ENCODE measurements at regions of chr16 and their contacts with region 1.

Region 1: GRCh38 chr16:66830422-66831404 is at the start of gene NAE1:
- DNase-seq: peak; percentile 89
- H3K4me3 Mint-ChIP-seq: peak within 1 kb of the TSS; percentile 71
- H3K27ac Mint-ChIP-seq: peak within 1 kb of the TSS; percentile 78
- H3K4me1 Mint-ChIP-seq: peaks cover 36% of the 10 kb centered on the region
- H3K27me3 Mint-ChIP-seq: peaks cover 4% of the 10 kb centered on the region

Region 2: GRCh38 chr16:66751303-66751991 is 79.3 kb before region 1 on chr16 and contains the start of gene DYNC1LI2:
- CTCF ChIA-PET with region 1: interaction called, 12 read pairs
- DNase-seq: peak; percentile 87
- H3K4me3 Mint-ChIP-seq: peak within 1 kb of the TSS; percentile 76
- H3K27ac Mint-ChIP-seq: peak within 1 kb of the TSS; percentile 84
- H3K4me1 Mint-ChIP-seq: peaks cover 45% of the 10 kb centered on the region
- H3K27me3 Mint-ChIP-seq: peaks cover 26% of the 10 kb centered on the region

Region 3: GRCh38 chr16:66810391-66810790 is 20.3 kb before region 1 on chr16:
- CTCF ChIA-PET with region 1: interaction called, 15 read pairs
- DNase-seq: no peak
- H3K4me3 Mint-ChIP-seq: no peak overlapping the region
- H3K27ac Mint-ChIP-seq: no peak overlapping the region
- H3K4me1 Mint-ChIP-seq: no peaks in the 10 kb centered on the region
- H3K27me3 Mint-ChIP-seq: no peaks in the 10 kb centered on the region

Region 4: DNA sequence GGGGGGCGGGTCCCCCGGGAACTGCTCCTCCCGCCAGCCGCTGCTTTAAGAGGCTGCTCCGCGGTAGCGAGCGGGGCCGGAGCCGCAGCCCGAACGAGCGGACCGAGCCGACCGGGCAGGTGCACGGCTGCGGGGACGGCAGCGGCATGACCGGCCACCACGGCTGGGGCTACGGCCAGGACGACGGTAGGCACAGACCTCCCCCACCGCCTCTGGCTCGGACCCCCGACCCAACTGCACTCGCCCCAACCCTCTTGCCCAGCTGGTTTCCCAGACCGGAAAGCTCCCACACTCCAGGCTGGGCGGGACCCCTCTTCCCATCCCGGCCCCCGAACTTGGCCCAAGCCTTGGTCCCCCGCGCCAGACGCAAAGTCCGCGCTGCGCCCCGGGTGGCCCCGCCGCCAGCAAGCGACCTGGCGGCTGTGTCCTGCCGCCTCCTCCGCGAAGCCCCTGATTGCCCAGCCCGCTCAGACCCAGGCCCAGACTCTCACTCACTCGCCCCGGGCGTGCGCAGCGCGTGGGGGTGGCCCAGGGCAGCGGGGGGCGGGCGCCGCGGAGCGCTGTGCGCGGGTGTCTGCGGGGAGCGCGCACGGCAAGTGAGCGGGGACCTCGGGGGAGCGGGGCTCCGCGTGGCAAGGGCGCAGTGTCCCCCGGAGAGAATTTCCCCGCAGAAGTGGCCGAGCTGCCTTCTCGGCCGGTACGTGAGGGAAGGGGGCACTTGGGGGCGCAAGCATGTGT is 13.8 kb after region 1 on chr16 and contains the start of gene CA7:
- CTCF ChIA-PET with region 1: interaction called, 30 read pairs
- DNase-seq: no peak
- H3K4me3 Mint-ChIP-seq: peak within 1 kb of the TSS; percentile 45
- H3K27ac Mint-ChIP-seq: no peak within 1 kb of the TSS
- H3K4me1 Mint-ChIP-seq: peaks cover 23% of the 10 kb centered on the region
- H3K27me3 Mint-ChIP-seq: peaks cover 74% of the 10 kb centered on the region

Region 5: DNA sequence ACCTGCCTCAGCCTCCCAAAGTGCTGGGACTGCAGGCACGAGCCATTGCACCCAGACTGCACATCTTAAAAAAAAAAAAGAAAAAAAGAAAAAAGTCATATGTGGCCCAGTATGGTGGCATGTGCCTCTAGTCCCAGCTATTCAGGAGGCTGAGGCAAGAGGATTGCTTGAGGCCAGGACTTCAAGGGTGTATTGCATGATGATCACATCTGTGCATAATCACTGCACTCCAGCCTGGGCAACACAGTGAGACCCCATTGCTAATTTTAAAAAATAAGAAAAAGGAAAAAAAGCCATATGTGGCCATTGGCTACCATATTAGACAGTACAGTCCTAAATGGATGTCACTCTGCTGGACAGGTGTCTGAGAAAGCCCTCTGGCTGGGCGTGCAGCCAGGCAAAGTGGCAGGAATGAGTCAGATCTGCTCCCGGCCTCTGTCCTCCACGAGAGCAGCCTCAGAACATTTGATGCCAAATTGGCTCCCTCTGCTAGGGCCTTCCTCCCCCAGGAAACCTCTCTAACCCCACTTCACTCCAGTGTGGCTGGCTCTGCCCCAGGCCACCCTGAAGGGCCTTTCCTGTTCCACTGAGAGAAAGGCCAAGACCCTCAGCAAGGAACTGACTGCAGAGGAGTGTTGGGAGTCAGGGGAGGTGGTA is 28.2 kb after region 1 on chr16:
- CTCF ChIA-PET with region 1: interaction called, 10 read pairs
- DNase-seq: peak; percentile 13
- H3K4me3 Mint-ChIP-seq: no peak overlapping the region
- H3K27ac Mint-ChIP-seq: no peak overlapping the region
- H3K4me1 Mint-ChIP-seq: no peaks in the 10 kb centered on the region
- H3K27me3 Mint-ChIP-seq: peaks cover 23% of the 10 kb centered on the region